ENCODE measurements at regions of chr1 and their contacts with region 1.

Region 1: DNA sequence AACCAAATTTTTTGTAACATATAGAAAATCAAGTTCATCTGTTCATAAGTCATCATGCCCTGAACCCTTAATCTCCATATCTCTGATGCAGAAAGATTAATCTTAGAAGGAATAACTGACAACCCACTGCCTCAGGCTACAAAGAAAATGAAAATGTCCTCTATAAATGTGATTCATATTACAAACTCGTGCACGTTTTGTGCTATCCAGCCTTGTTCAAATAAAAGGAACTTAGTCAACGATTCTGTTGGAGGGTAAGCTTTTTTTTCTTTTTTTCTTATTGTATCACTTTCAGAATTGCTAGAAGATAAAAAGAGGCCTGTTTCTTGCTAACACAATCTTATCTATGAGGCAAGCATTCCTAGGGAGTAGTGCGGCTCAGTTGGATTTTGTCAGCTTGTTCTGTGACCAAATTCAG is 228.5 kb downstream of the TM2D1 start:
- DNase-seq: peak; percentile 46 to 71
- ATAC-seq: peak; percentile 88
- H3K4me3 ChIP-seq: no peak overlapping the region
- H3K27ac ChIP-seq: peak overlapping the region; percentile 79 to 85
- H3K4me1 ChIP-seq: peaks cover 31% of the 10 kb centered on the region
- CTCF ChIP-seq: no peak
- EP300 ChIP-seq: peak in 1 of 2 experiments; percentile 70; a peak in 1 of 5 replicates
- POLR2A ChIP-seq: no peak
- RAD21 ChIP-seq: no peak

Region 2: GRCh38 chr1:61477301-61477700 is 19.2 kb before region 1 on chr1:
- CTCF ChIA-PET with region 1: no interaction called
- POLR2A ChIA-PET with region 1: no interaction called
- DNase-seq: no peak
- ATAC-seq: no peak
- H3K4me3 ChIP-seq: no peak overlapping the region
- H3K27ac ChIP-seq: no peak overlapping the region
- H3K4me1 ChIP-seq: peaks cover 26% of the 10 kb centered on the region
- CTCF ChIP-seq: no peak
- EP300 ChIP-seq: no peak
- POLR2A ChIP-seq: no peak
- RAD21 ChIP-seq: no peak

Region 3: GRCh38 chr1:61518670-61519400 is 22.4 kb after region 1 on chr1:
- CTCF ChIA-PET with region 1: no interaction called
- POLR2A ChIA-PET with region 1: no interaction called
- DNase-seq: no peak
- ATAC-seq: no peak
- H3K4me3 ChIP-seq: no peak overlapping the region
- H3K27ac ChIP-seq: no peak overlapping the region
- H3K4me1 ChIP-seq: peaks cover under 1% of the 10 kb centered on the region; the same call in 1 of the 3 replicates
- CTCF ChIP-seq: no peak
- EP300 ChIP-seq: no peak
- POLR2A ChIP-seq: no peak
- RAD21 ChIP-seq: no peak

Region 4: DNA sequence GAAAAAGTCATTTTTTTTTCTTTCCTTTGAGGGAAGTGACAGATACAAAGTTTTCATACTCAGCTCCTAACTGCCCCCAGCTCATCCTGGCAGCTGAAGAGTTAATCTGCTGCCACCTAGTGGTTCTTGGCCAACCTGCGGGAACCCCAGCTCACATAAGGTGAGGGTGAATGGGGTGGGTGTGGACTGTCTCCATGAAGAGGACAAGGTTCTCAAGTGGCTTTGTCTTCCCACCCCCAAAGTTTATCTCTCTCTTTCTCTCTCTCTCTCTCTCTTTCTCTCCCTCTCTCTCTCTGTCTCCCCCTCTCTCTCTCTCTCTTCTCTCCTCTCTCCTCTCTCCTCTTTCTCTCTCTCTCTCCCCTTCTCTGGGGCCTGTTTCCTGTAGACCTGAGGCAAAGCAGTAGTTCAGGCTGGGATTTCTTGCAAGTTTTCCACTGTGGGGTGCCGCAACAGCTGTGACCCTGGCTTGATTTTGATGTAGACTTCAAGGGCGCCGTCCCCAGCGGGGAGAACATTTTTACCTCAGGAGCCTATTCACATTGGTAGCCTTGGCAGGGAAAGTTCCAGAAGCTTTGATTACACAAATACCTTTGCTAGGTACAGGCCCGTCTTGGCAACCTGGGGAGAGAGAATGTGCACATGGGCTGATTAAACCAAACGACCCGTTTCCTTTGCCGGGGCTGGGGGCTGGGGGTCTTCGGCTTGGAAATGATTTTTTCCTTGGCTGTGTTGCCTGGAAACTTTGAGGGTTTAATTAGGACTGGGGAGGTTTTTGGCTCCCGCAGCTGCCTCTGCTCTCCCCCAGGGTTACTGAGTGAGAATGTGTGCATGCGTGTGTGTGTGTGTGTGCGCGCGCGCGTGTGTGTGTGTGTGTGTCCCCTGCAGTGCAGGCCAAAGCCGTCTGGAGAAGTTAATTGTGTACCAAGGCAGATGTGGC is 92.5 kb after region 1 on chr1:
- CTCF ChIA-PET with region 1: interaction called, 10 read pairs
- POLR2A ChIA-PET with region 1: no interaction called
- DNase-seq: peak; percentile 43 to 73
- ATAC-seq: peak; percentile 98 to 100
- H3K4me3 ChIP-seq: no peak overlapping the region
- H3K27ac ChIP-seq: peak overlapping the region; percentile 45 to 67; a peak in 4 of 6 replicates
- H3K4me1 ChIP-seq: peaks cover 4% of the 10 kb centered on the region; the same call in 1 of the 3 replicates
- CTCF ChIP-seq: peak; percentile 71
- EP300 ChIP-seq: no peak
- POLR2A ChIP-seq: no peak
- RAD21 ChIP-seq: peak; percentile 80 to 88